ENCODE measurements at regions of chr2 and their contacts with region 1.

Region 1: GRCh38 chr2:175684457-175684856 is 317.6 kb downstream of the LNPK start:
- DNase-seq: no peak
- ATAC-seq: no peak
- H3K4me3 ChIP-seq: no peak overlapping the region
- H3K27ac ChIP-seq: no peak overlapping the region
- H3K4me1 ChIP-seq: no peaks in the 10 kb centered on the region
- H3K27me3 ChIP-seq: peaks cover 0 to 62% (median 10%) of the 10 kb centered on the region in 9 donors
- CTCF ChIP-seq: no peak
- POLR2A ChIP-seq: no peak

Region 2: GRCh38 chr2:175366815-175367214 is 317.6 kb before region 1 on chr2:
- intact Hi-C with region 1: loop called in 4 of 10 experiments (anchors 10 kb)
- DNase-seq: peak in 2 of 5 donors; percentile 13 to 20
- ATAC-seq: peak in 3 of 4 donors; percentile 37 to 76 (median 69)
- H3K4me3 ChIP-seq: no peak overlapping the region
- H3K27ac ChIP-seq: no peak overlapping the region
- H3K4me1 ChIP-seq: peaks cover 0 to 11% (median 0%) of the 10 kb centered on the region in 12 donors
- H3K27me3 ChIP-seq: peaks cover 0 to 71% (median 11%) of the 10 kb centered on the region in 9 donors
- CTCF ChIP-seq: peak; percentile 54 to 76 (median 70)
- POLR2A ChIP-seq: no peak

Region 3: DNA sequence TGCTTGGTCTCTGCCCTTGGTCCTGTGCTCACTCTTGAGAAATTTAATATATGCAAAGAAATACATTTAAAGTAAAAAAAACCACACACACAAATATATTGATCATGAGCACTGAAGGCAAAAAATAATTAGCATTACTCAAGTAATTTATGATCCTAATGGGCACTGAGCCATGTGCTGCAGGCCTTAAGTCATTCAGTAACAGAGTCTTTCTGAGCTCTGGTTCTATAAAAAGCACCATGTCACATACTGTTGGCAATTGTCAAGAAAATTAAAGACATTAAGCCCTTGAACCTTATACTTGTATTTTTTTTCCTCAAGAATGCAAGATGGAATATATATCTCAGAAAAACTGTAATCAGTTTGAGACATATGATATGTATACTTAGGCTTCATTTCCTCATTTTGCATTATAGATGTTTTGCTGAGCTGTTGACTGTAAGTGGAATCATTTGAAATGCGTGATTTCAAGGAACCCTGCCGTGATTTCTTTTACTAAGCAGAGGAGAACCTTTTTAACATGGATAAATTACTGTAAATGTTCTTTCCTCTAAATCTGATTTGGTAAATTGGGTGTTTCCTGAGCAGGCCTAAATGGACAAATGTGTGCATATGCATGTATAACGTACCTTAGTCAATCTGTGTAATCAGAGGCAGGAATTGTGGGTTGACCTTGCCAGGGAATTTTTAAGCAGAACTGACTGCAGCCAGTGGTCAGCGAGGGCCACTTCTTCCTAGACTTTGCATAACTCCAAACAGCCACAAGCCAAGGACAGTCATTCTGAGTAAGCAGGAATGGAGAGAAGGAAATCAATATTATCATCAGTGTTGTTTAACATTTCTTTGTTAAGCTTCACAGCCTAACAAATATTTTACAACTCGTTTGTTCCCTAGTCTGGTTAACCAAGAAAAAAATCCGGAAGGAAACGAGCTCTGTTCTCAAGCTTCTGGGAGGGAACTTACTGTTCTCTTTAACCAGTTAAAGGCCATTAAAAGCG is 311.5 kb before region 1 on chr2:
- intact Hi-C with region 1: loop called in 4 of 10 experiments (anchors 10 kb)
- DNase-seq: no peak
- ATAC-seq: no peak
- H3K4me3 ChIP-seq: no peak overlapping the region
- H3K27ac ChIP-seq: peak overlapping the region in 1 of 12 donors; percentile 58
- H3K4me1 ChIP-seq: peaks cover 0 to 25% (median 0%) of the 10 kb centered on the region in 12 donors
- H3K27me3 ChIP-seq: peaks cover 0 to 33% (median 8%) of the 10 kb centered on the region in 9 donors
- CTCF ChIP-seq: no peak
- POLR2A ChIP-seq: no peak

Region 4: GRCh38 chr2:175463589-175464310 is 220.7 kb before region 1 on chr2:
- intact Hi-C with region 1: no loop called
- DNase-seq: no peak
- ATAC-seq: no peak
- H3K4me3 ChIP-seq: no peak overlapping the region
- H3K27ac ChIP-seq: no peak overlapping the region
- H3K4me1 ChIP-seq: no peaks in the 10 kb centered on the region
- H3K27me3 ChIP-seq: no peaks in the 10 kb centered on the region
- CTCF ChIP-seq: no peak
- POLR2A ChIP-seq: no peak